Heart left ventricle (tissue), 16 donors: ENCODE measurements at regions of chrX and their contacts with region 1.

Region 1: GRCh38 chrX:103686199-103687072 is at the start of gene MORF4L2:
- DNase-seq: peak; percentile 89 to 94 (median 91)
- ATAC-seq: peak; percentile 91 to 95 (median 94)
- H3K4me3 ChIP-seq: peak within 1 kb of the TSS; percentile 30 to 96 (median 68)
- H3K27ac ChIP-seq: peak within 1 kb of the TSS; percentile 92 to 99 (median 97)
- H3K4me1 ChIP-seq: peaks cover 0 to 36% (median 3%) of the 10 kb centered on the region in 12 donors
- H3K27me3 ChIP-seq: peaks cover 0 to 6% (median 0%) of the 10 kb centered on the region in 9 donors
- CTCF ChIP-seq: no peak
- POLR2A ChIP-seq: peak; percentile 65 to 78
- total RNA-seq, gene MORF4L2: 148 to 238 (median 189) TPM

Region 2: DNA sequence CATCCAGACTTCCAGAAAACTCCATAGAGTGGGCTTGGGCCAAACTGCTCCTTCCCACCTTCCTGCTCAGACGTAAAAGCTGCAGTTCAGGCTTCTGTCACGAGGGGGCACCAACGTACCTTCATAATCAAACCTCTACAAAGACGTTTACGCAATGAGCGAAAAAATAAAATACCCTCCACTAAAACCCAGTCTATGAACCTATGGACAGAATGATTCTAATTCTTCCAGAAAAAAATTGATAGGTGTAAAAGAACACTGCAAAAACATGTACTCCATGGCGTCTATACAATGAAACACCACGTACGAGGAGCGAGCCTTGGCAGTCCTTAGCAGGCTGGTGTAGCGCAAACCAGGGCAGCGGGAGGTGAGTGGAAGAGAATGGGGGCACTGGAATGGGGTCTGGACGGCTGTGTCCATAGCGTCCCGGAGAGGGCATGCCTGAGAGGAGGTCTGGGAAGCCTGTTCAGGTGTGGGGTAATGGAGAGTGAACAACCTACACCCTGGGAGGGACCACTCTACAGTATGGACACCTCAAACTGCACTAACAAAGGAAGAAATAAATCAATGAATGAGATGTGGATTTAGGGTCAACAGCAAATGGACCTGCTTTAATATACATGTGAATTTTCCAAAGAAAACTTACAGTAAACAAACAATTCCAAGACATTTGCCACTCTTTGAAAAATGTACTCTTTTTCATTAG is 152.8 kb before region 1 on chrX:
- intact Hi-C with region 1: loop called in 3 of 10 experiments (anchors 5 to 10 kb)
- DNase-seq: peak; percentile 45 to 73 (median 64)
- ATAC-seq: peak; percentile 55 to 73 (median 66)
- H3K4me3 ChIP-seq: peak overlapping the region in 10 of 12 donors; percentile 32 to 60 (median 46)
- H3K27ac ChIP-seq: no peak overlapping the region
- H3K4me1 ChIP-seq: peaks cover 0 to 5% (median 0%) of the 10 kb centered on the region in 12 donors
- H3K27me3 ChIP-seq: peaks cover 0 to 14% (median 0%) of the 10 kb centered on the region in 9 donors
- CTCF ChIP-seq: peak; percentile 55 to 84 (median 72)
- POLR2A ChIP-seq: no peak

Region 3: DNA sequence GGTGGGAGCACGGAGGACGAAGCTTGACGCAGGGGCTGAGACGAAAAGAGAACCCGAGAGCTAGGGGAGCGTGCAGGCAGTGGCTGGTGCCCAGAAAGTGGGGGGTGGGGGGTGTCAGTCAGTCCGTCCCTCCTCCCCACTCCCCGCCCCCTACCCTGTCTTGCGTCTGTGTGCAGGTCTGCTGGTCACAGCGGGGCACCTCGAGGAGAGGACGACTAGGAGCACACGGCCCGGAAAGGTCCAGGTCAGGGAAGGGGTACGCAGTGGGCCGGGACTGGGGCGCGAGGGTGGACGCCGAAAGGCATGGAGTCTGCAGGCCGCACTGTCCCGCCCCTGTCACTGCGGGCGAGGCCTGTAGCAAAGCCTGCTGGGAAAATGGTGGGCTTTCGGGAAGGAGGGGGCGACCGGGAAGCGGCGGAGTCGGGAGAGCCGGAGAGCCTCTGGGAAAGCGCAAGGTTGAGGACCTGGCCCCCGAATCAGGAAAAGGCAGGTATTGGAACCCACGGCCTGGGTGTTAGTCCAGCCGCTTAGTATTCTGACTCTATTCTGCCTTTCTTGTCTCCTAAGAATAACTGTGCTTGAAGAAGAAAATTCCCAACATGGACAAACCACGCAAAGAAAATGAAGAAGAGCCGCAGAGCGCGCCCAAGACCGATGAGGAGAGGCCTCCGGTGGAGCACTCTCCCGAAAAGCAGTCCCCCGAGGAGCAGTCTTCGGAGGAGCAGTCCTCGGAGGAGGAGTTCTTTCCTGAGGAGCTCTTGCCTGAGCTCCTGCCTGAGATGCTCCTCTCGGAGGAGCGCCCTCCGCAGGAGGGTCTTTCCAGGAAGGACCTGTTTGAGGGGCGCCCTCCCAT is 56.9 kb before region 1 on chrX:
- intact Hi-C with region 1: loop called in 4 of 10 experiments (anchors 2 to 10 kb)
- DNase-seq: peak; percentile 66 to 77 (median 72)
- ATAC-seq: peak; percentile 90 to 94 (median 93)
- H3K4me3 ChIP-seq: peak overlapping the region; percentile 39 to 94 (median 72)
- H3K27ac ChIP-seq: peak overlapping the region; percentile 70 to 97 (median 93)
- H3K4me1 ChIP-seq: peaks cover 0 to 23% (median 4%) of the 10 kb centered on the region in 12 donors
- H3K27me3 ChIP-seq: peaks cover 0 to 15% (median 0%) of the 10 kb centered on the region in 9 donors
- CTCF ChIP-seq: peak in 10 of 12 donors; percentile 12 to 66 (median 46)
- POLR2A ChIP-seq: no peak

Region 4: DNA sequence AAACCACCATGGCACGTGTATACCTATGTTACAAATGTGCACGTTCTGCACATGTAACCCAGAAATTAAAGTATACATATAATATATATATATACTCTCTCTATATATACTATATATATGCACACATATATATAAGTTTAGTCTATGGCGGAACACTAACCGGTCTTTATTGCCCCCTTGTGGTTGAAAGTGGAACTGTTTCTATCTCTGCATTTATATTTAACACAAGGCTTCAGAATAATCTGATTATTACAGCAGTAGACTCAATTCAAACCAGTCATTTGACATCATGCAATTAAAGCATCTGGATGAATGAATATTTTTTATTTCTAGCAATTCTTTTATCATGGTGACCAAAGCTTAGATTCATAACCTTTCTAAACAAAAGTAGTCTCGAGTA is 131.1 kb after region 1 on chrX:
- intact Hi-C with region 1: loop called in 8 of 10 experiments (anchors 1 to 5 kb)
- DNase-seq: no peak
- ATAC-seq: no peak
- H3K4me3 ChIP-seq: no peak overlapping the region
- H3K27ac ChIP-seq: no peak overlapping the region
- H3K4me1 ChIP-seq: no peaks in the 10 kb centered on the region
- H3K27me3 ChIP-seq: peaks cover 0 to 9% (median 0%) of the 10 kb centered on the region in 9 donors
- CTCF ChIP-seq: peak; percentile 48 to 91 (median 72)
- POLR2A ChIP-seq: no peak

Region 5: GRCh38 chrX:104165894-104166737 is 479.7 kb after region 1 on chrX and contains the start of gene FAM199X:
- intact Hi-C with region 1: loop called in 2 of 10 experiments (anchors 10 kb)
- DNase-seq: peak; percentile 89 to 94 (median 90)
- ATAC-seq: peak; percentile 96 to 99 (median 98)
- H3K4me3 ChIP-seq: peak within 1 kb of the TSS; percentile 63 to 98 (median 80)
- H3K27ac ChIP-seq: peak within 1 kb of the TSS; percentile 68 to 91 (median 87)
- H3K4me1 ChIP-seq: peaks cover 0 to 18% (median 8%) of the 10 kb centered on the region in 12 donors
- H3K27me3 ChIP-seq: peaks cover 0 to 5% (median 0%) of the 10 kb centered on the region in 9 donors
- CTCF ChIP-seq: peak; percentile 54 to 89 (median 70)
- POLR2A ChIP-seq: peak in 1 of 2 donors; percentile 71
- total RNA-seq, gene FAM199X: 9.0 to 13.9 (median 11.3) TPM